Activated naive CD4-positive, alpha-beta T cell treated with anti-CD3 and anti-CD28 coated beads for 36 hours (primary cell): ENCODE measurements at regions of chr17 and their contacts with region 1.

Region 1: DNA sequence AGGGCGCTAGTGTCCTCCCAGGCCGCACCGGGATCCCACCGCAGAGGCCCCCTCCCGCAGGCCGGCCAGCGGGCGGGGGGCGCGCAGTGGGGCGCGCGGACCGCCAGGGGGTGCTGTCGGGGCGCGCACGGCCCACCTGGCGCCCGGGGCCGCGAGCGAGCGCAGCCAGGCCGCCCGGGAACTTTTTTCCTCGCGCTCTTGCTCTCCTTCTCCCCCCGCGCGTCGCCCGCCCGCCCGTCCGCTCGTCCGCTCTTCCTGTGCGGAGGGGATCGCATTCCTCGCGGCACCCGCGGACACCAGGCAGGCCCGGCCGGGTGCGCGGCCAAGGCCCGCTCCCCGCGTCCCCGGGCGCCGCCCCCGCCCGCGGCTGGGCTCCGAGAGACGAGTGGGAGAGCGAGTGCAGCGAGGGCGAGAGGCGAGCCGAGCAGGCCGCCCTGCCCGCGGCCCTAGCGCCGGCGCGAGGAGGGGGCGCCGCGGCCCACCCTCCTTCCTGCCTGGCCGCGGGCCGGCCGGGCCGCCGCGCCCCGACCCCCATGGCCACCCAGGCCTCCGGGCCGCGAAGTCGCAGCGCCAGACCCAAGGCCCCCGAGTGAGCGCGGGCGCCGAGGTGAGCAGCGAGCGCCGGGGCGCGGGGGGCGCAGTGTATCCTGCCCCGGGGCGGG is at the start of gene RAI1:
- DNase-seq: peak; percentile 66
- H3K4me3 Mint-ChIP-seq: peak within 1 kb of the TSS; percentile 88
- H3K27ac Mint-ChIP-seq: peak within 1 kb of the TSS; percentile 87
- H3K4me1 Mint-ChIP-seq: peaks cover 30% of the 10 kb centered on the region
- H3K27me3 Mint-ChIP-seq: no peaks in the 10 kb centered on the region
- total RNA-seq, gene RAI1: 9.2 to 12.0 TPM

Region 2: GRCh38 chr17:17440010-17440843 is 241.1 kb before region 1 on chr17:
- CTCF ChIA-PET with region 1: no interaction called
- intact Hi-C with region 1: no loop called
- DNase-seq: peak; percentile 85
- H3K4me3 Mint-ChIP-seq: no peak overlapping the region
- H3K27ac Mint-ChIP-seq: no peak overlapping the region
- H3K4me1 Mint-ChIP-seq: peaks cover 4% of the 10 kb centered on the region
- H3K27me3 Mint-ChIP-seq: no peaks in the 10 kb centered on the region

Region 3: GRCh38 chr17:17723354-17724261 is 42.3 kb after region 1 on chr17:
- CTCF ChIA-PET with region 1: interaction called, 3 read pairs
- intact Hi-C with region 1: loop called (anchors 2 kb)
- DNase-seq: peak; percentile 22
- H3K4me3 Mint-ChIP-seq: peak overlapping the region; percentile 80
- H3K27ac Mint-ChIP-seq: no peak overlapping the region
- H3K4me1 Mint-ChIP-seq: peaks cover 37% of the 10 kb centered on the region
- H3K27me3 Mint-ChIP-seq: peaks cover 24% of the 10 kb centered on the region

Region 4: GRCh38 chr17:17783116-17783824 is 102.0 kb after region 1 on chr17:
- CTCF ChIA-PET with region 1: interaction called, 3 read pairs
- intact Hi-C with region 1: loop called (anchors 2 kb)
- DNase-seq: peak; percentile 71
- H3K4me3 Mint-ChIP-seq: peak overlapping the region; percentile 70
- H3K27ac Mint-ChIP-seq: no peak overlapping the region
- H3K4me1 Mint-ChIP-seq: peaks cover 21% of the 10 kb centered on the region
- H3K27me3 Mint-ChIP-seq: peaks cover 2% of the 10 kb centered on the region

Region 5: DNA sequence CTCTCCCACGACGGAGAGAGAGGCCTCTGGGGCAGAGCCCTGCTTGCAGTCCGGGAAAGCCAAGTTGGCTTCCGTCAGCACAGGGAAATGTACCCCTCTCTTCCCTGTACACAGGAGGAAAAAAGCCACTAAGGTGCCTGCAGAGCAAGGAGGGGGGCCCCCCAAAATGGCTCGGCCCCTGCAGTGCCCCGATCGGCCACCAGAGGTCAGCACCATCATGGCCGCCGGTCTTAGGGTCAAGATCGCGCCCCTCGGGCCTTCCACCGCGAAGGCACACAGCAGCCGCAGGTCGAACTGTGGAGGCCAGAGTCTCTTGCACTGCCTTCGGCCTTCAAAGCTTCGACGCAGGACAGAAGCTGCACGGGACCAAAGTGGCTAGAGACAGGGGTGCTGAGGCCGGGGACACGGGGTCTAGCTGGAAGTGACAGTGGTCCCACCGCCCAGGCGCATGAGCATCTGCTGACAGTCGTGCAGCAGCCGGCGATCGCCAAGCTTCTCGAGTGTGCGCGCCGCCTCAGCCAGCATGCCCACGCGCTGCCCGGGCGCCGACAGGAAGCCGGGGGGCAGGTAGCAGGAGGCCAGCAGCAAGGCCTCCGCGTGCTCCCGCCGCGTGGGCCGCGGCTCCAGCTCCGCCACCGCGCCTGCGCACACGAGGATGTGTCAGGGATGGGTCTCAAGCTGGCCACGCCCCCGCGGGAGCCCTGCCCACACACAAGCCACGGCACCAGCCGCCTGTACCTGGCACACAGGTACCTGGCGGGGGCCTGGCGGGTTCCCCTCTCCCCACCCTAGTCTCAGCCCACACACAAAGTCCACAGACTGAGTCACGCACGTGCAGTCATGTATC is 131.1 kb after region 1 on chr17:
- CTCF ChIA-PET with region 1: interaction called, 4 read pairs
- intact Hi-C with region 1: loop called (anchors 5 kb)
- DNase-seq: peak; percentile 72
- H3K4me3 Mint-ChIP-seq: no peak overlapping the region
- H3K27ac Mint-ChIP-seq: peak overlapping the region; percentile 18
- H3K4me1 Mint-ChIP-seq: peaks cover 10% of the 10 kb centered on the region
- H3K27me3 Mint-ChIP-seq: no peaks in the 10 kb centered on the region

Region 6: DNA sequence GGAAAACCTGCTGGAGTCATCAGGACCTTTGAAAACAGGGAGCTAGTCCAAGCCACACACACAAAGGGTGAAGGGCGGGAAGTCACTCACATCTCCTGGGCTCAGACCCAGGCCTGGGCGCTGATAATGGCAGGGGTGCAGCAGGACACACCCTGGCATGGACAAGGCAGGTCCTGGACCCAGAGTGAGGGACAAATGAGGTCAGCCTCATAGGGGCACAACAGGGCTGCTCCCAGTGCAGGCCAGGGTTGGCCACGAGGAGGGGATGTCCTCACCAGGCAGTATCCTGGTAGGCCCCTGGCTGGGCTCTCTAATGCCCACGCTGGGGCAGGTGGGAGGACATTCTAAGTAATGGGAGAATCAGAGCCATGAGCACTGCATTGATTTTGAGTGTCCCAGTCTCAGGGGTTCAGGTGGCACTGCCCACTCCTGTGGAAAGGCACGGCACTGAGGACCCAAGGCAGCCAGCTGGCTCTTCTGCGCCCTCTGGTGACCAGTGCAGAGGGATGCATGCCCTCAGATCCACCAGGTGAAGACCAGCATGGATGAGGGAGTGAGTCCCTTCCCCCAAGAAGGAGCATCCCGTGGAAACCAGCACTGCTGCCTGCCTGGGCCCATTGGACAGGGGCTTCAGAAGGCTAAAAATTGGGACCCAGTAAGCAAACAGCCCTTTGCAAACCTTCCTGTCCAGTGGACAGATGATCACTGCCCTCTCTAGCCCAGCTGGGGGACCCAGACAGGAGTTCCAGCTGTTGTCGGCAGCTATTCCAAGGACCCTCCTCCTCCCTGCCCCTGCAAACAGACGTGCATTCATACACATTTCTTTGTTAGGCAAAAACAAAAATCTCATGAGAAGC is 178.8 kb after region 1 on chr17:
- CTCF ChIA-PET with region 1: interaction called, 23 read pairs
- intact Hi-C with region 1: loop called (anchors 1 kb)
- DNase-seq: peak; percentile 80
- H3K4me3 Mint-ChIP-seq: no peak overlapping the region
- H3K27ac Mint-ChIP-seq: no peak overlapping the region
- H3K4me1 Mint-ChIP-seq: peaks cover 26% of the 10 kb centered on the region
- H3K27me3 Mint-ChIP-seq: no peaks in the 10 kb centered on the region

Region 7: DNA sequence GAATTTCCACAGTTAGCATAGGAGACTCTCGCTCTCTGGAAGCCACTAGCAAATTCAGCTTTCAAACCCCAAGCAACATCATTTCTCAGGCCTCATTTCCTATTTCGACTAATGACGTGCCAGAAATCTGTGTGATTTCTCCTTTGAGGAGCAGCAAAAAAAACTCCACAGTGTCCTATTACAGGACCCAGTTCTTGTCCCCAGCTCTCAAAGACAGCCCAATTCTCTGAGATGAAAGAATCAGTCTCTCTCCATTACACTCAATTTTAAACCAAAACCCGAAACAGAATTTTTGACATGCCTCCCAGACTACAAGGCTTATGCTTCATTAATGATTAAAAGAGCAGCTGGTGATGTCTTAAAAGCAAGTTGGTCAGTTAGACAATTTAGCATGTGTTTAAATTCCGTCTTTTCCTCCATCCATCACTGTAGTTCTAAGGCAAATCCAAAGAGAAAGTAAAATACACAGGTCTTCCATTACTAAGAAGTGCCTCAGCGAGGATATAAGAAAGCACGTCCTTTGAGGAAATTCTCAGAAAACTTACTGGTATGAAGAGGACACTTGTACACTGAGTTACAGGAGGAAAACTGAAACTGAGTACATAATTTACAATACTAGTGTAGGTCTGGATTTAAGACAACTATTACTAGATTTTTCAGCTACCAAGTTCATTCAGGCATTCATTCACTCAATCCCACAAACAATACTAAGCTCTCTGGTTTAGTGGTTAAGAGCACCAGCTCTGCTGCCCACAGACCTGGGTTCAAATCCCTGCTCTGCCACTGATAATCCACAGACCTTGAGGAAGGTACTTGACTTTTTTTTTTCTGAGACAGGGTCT is 278.4 kb after region 1 on chr17:
- CTCF ChIA-PET with region 1: no interaction called
- intact Hi-C with region 1: loop called (anchors 2 kb)
- DNase-seq: peak; percentile 60
- H3K4me3 Mint-ChIP-seq: peak overlapping the region; percentile 74
- H3K27ac Mint-ChIP-seq: peak overlapping the region; percentile 96
- H3K4me1 Mint-ChIP-seq: peaks cover 72% of the 10 kb centered on the region
- H3K27me3 Mint-ChIP-seq: no peaks in the 10 kb centered on the region

Region 8: GRCh38 chr17:18087610-18088491 is 406.5 kb after region 1 on chr17 and contains the start of gene DRG2:
- CTCF ChIA-PET with region 1: no interaction called
- intact Hi-C with region 1: loop called (anchors 5 kb)
- DNase-seq: peak; percentile 92
- H3K4me3 Mint-ChIP-seq: peak within 1 kb of the TSS; percentile 97
- H3K27ac Mint-ChIP-seq: peak within 1 kb of the TSS; percentile 93
- H3K4me1 Mint-ChIP-seq: peaks cover 29% of the 10 kb centered on the region
- H3K27me3 Mint-ChIP-seq: no peaks in the 10 kb centered on the region
- total RNA-seq, gene DRG2: 38.4 to 38.7 TPM